Activated CD8-positive, alpha-beta T cell treated with anti-CD3 and anti-CD28 coated beads, Interleukin-2, amount 10 ng/mL, durations not matched to agents 7 days and 5 days (primary cell): ENCODE measurements at regions of chr17 and their contacts with region 1.

Region 1: DNA sequence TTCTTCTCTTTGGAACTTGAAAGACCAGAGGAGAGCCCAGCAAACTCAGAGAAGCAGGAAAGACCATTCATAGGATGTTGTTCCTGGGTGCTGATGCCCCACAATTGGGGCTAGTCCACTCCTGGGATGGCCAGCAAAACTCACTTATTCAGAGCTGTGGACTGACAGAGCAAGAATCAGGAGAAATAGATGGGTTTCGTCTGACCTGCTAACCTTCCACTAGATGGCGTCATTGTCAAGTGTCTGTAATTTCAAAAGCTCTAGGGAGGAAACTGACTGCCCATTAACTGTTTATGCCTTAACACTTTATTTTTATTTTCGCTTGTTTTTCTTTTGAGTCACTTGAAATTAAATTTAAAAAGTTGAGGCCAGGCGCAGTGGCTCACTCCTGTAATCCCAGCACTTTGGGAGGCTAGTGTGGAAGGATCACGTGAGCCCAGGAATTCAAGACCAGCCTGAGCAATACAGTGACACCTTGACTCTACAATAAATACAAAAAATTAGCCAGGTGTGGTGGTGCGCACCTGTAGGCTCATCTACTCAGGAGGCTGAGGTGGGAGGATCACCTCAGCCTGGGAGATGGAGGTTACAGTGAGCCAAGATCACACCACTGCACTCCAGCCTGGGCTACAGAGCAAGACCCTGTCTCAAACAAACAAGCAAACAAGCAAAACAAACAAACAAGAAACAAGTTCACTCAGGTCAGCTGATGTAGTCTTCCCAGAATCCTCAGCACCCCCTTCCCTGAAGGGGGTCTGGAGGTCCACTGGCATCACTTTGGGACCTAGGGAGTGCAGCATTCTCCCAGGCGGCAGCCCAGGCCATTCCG is 28.6 kb upstream of the MILR1 start:
- DNase-seq: peak; percentile 63
- ATAC-seq: peak; percentile 86
- H3K4me3 Mint-ChIP-seq: no peak overlapping the region
- H3K27ac Mint-ChIP-seq: no peak overlapping the region
- H3K4me1 Mint-ChIP-seq: peaks cover 14% of the 10 kb centered on the region
- H3K27me3 Mint-ChIP-seq: peaks cover 3% of the 10 kb centered on the region

Region 2: GRCh38 chr17:64306850-64307463 is 113.4 kb before region 1 on chr17:
- CTCF ChIA-PET with region 1: interaction called, 92 read pairs
- POLR2A ChIA-PET with region 1: no interaction called
- DNase-seq: peak; percentile 81
- ATAC-seq: peak; percentile 87
- H3K4me3 Mint-ChIP-seq: no peak overlapping the region
- H3K27ac Mint-ChIP-seq: no peak overlapping the region
- H3K4me1 Mint-ChIP-seq: no peaks in the 10 kb centered on the region
- H3K27me3 Mint-ChIP-seq: no peaks in the 10 kb centered on the region

Region 3: GRCh38 chr17:64348666-64349065 is 71.7 kb before region 1 on chr17:
- CTCF ChIA-PET with region 1: interaction called, 18 read pairs
- POLR2A ChIA-PET with region 1: no interaction called
- DNase-seq: no peak
- ATAC-seq: no peak
- H3K4me3 Mint-ChIP-seq: no peak overlapping the region
- H3K27ac Mint-ChIP-seq: peak overlapping the region; percentile 92
- H3K4me1 Mint-ChIP-seq: peaks cover 28% of the 10 kb centered on the region
- H3K27me3 Mint-ChIP-seq: no peaks in the 10 kb centered on the region

Region 4: GRCh38 chr17:64399071-64399766 is 21.1 kb before region 1 on chr17:
- CTCF ChIA-PET with region 1: interaction called, 52 read pairs
- POLR2A ChIA-PET with region 1: no interaction called
- DNase-seq: peak; percentile 51
- ATAC-seq: peak; percentile 13
- H3K4me3 Mint-ChIP-seq: peak overlapping the region; percentile 54
- H3K27ac Mint-ChIP-seq: peak overlapping the region; percentile 78
- H3K4me1 Mint-ChIP-seq: peaks cover 67% of the 10 kb centered on the region
- H3K27me3 Mint-ChIP-seq: no peaks in the 10 kb centered on the region

Region 5: GRCh38 chr17:64470625-64471024 is 50.3 kb after region 1 on chr17:
- CTCF ChIA-PET with region 1: interaction called, 12 read pairs
- POLR2A ChIA-PET with region 1: no interaction called
- DNase-seq: no peak
- ATAC-seq: no peak
- H3K4me3 Mint-ChIP-seq: no peak overlapping the region
- H3K27ac Mint-ChIP-seq: no peak overlapping the region
- H3K4me1 Mint-ChIP-seq: no peaks in the 10 kb centered on the region
- H3K27me3 Mint-ChIP-seq: peaks cover 11% of the 10 kb centered on the region

Region 6: DNA sequence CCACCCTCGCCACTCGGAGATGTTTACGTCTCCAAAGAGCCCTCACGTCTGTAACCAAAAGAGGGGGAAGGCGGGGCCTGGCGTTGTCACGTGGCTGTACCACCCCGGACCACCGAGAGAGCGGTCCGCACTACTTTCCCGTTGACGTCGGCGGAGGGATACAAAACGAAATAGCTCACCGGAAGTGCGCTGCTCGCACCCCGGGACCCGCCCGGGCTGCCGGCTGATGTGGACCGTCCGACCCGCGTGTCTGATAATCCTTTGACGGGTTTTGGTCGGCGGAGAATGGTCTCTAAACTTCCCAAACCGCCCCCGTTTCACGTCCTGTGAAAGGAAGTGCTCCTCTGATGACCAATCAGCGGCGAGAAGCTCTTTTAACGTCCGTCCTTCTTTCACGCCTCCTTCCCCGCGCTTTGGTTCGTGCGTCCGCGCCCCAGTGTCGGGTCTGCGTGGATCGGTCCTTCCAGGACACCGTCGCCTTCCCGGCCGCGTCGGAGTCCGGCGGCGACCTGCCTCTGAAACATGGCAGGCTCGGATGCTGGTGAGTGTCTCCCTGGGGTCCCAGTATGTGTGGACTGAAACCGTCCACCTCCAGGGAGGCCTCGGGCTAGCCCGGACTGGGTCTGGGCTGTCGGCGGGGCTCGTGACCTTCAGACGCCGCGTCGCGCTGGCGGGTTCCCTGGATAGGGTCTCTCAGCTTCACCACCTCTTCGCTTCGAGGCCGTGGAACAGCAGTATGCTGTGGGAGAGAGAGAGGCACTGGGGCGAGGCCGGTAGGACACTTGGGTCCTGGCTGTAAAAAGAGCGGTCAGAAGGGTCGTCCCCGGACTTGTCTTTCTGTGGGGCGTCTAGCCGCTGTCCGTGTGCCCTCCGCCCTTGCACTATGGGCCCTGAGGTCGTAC is 86.5 kb after region 1 on chr17 and contains the start of gene CEP95:
- CTCF ChIA-PET with region 1: interaction called, 88 read pairs
- POLR2A ChIA-PET with region 1: interaction called, 19 read pairs
- DNase-seq: peak; percentile 98
- ATAC-seq: peak; percentile 64
- H3K4me3 Mint-ChIP-seq: peak within 1 kb of the TSS; percentile 99
- H3K27ac Mint-ChIP-seq: peak within 1 kb of the TSS; percentile 100
- H3K4me1 Mint-ChIP-seq: peaks cover 45% of the 10 kb centered on the region
- H3K27me3 Mint-ChIP-seq: no peaks in the 10 kb centered on the region
- total RNA-seq, gene CEP95: 49.2 to 51.7 TPM

Region 7: GRCh38 chr17:64661976-64662773 is 241.8 kb after region 1 on chr17 and contains the start of gene SMURF2:
- CTCF ChIA-PET with region 1: no interaction called
- POLR2A ChIA-PET with region 1: no interaction called
- DNase-seq: peak; percentile 84
- ATAC-seq: peak; percentile 88
- H3K4me3 Mint-ChIP-seq: peak within 1 kb of the TSS; percentile 98
- H3K27ac Mint-ChIP-seq: peak within 1 kb of the TSS; percentile 94
- H3K4me1 Mint-ChIP-seq: peaks cover 36% of the 10 kb centered on the region
- H3K27me3 Mint-ChIP-seq: no peaks in the 10 kb centered on the region
- total RNA-seq, gene SMURF2: 16.1 to 16.4 TPM